HepG2 (cell line): ENCODE measurements at regions of chr11 and their contacts with region 1.

Region 1: GRCh38 chr11:73982969-73983740 is 512 bp upstream of the UCP2 start:
- DNase-seq: peak; percentile 94
- ATAC-seq: peak; percentile 94
- H3K4me3 ChIP-seq: peak overlapping the region; percentile 71 to 93 (median 86)
- H3K27ac ChIP-seq: peak overlapping the region; percentile 91
- H3K4me1 ChIP-seq: peaks cover 52% of the 10 kb centered on the region
- H3K27me3 ChIP-seq: no peaks in the 10 kb centered on the region
- CTCF ChIP-seq: 0 out of 2 replicates have a peak, but pooled peaks have one; percentile 7
- EP300 ChIP-seq: 0 out of 4 replicates have a peak, but pooled peaks of 1 of the 2 experiments have one; percentile 17
- POLR2A ChIP-seq: peak; percentile 47 to 74
- RAD21 ChIP-seq: no peak

Region 2: GRCh38 chr11:74018331-74019005 is 35.3 kb after region 1 on chr11:
- CTCF ChIA-PET with region 1: no interaction called
- POLR2A ChIA-PET with region 1: interaction called, 32 read pairs
- in situ Hi-C with region 1: no loop called
- intact Hi-C with region 1: no loop called
- DNase-seq: peak; percentile 89
- ATAC-seq: peak; percentile 95
- H3K4me3 ChIP-seq: peak overlapping the region; percentile 15 to 69 (median 18); a peak in 5 of 6 replicates
- H3K27ac ChIP-seq: peak overlapping the region; percentile 92
- H3K4me1 ChIP-seq: peaks cover 37% of the 10 kb centered on the region
- H3K27me3 ChIP-seq: no peaks in the 10 kb centered on the region
- CTCF ChIP-seq: no peak
- EP300 ChIP-seq: peak in 1 of 2 experiments; percentile 88; a peak in 2 of 4 replicates
- POLR2A ChIP-seq: peak; percentile 47 to 48; a peak in 2 of 4 replicates
- RAD21 ChIP-seq: no peak